ENCODE measurements at regions of chr9 and their contacts with region 1.

Region 1: GRCh38 chr9:73515216-73515615 is 363.6 kb downstream of the ANXA1 start:
- DNase-seq: no peak
- ATAC-seq: no peak
- H3K4me3 ChIP-seq: no peak overlapping the region
- H3K4me3 Mint-ChIP-seq: no peak overlapping the region
- H3K27ac ChIP-seq: no peak overlapping the region
- H3K27ac Mint-ChIP-seq: no peak overlapping the region
- H3K4me1 ChIP-seq: no peaks in the 10 kb centered on the region
- H3K4me1 Mint-ChIP-seq: no peaks in the 10 kb centered on the region
- H3K27me3 ChIP-seq: no peaks in the 10 kb centered on the region
- H3K27me3 Mint-ChIP-seq: no peaks in the 10 kb centered on the region

Region 2: DNA sequence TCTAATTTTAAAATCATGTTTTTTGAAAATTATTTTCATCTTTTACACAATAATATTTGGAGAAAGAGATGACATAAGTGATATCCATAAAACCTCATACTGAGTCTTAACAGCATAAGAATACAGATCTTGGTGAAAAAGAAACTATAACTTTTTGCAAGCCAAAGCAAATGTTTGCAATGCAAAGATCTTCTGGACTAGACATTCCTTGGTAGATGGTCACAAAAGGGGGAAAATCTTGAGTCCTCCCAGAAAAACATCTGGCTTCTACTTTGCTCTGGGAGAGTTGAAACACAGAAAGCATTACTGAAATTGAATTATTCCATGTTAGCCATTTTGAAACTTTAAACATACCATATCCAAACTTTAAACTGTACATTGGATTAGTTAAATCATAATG is 55.4 kb before region 1 on chr9:
- CTCF ChIA-PET with region 1: no interaction called
- POLR2A ChIA-PET with region 1: no interaction called
- intact Hi-C with region 1: loop called in 1 of 2 experiments (anchors 5 kb)
- DNase-seq: no peak
- ATAC-seq: no peak
- H3K4me3 ChIP-seq: no peak overlapping the region
- H3K4me3 Mint-ChIP-seq: no peak overlapping the region
- H3K27ac ChIP-seq: no peak overlapping the region
- H3K27ac Mint-ChIP-seq: no peak overlapping the region
- H3K4me1 ChIP-seq: no peaks in the 10 kb centered on the region
- H3K4me1 Mint-ChIP-seq: no peaks in the 10 kb centered on the region
- H3K27me3 ChIP-seq: no peaks in the 10 kb centered on the region
- H3K27me3 Mint-ChIP-seq: no peaks in the 10 kb centered on the region

Region 3: DNA sequence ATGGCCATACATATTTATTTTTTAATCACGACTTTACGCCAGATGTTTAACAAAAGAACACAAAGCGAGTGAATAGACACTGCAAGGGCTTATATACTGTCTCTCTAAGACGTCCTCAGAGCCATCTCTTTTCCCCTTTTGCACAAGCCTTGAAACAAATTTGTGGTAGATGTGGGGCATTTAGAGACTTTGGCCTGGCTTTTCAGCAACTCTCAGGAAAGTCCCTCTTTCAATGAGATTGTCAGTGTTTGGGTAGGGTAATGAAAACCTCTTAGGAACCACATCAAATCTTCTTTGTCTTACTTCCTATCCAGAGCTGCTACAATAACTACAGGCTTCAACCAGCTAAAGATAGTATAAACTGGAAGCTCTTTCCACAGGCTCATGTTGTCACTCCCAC is 16.4 kb after region 1 on chr9:
- CTCF ChIA-PET with region 1: no interaction called
- POLR2A ChIA-PET with region 1: no interaction called
- intact Hi-C with region 1: no loop called
- DNase-seq: no peak
- ATAC-seq: no peak
- H3K4me3 ChIP-seq: no peak overlapping the region
- H3K4me3 Mint-ChIP-seq: no peak overlapping the region
- H3K27ac ChIP-seq: no peak overlapping the region
- H3K27ac Mint-ChIP-seq: no peak overlapping the region
- H3K4me1 ChIP-seq: no peaks in the 10 kb centered on the region
- H3K4me1 Mint-ChIP-seq: no peaks in the 10 kb centered on the region
- H3K27me3 ChIP-seq: no peaks in the 10 kb centered on the region
- H3K27me3 Mint-ChIP-seq: no peaks in the 10 kb centered on the region

Measured in naive thymus-derived CD4-positive, alpha-beta T cell (primary cell).